Motor neuron (in vitro differentiated cells): ENCODE measurements at regions of chr9 and their contacts with region 1.

Region 1: DNA sequence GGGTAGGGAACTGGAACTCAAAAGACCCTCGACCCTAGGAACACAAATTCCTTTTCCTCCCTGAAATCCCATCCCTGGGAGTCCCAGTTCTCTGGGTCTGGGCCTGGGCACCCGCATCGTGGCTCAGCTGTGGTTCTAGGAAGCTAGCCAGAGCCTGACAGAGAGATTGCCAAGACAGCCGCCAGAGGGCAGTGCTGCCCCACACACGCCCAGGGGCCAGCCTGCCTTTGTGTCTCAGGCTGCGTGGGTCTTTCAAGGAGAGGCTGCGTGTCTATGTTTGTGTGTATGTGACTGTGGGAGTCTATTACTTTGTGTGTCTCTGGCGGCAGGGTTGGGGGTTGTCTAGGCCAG is 32.0 kb upstream of the TTLL11 start:
- ATAC-seq: peak; percentile 83 to 92 (median 88)
- H3K4me3 ChIP-seq: no peak overlapping the region
- H3K27ac ChIP-seq: no peak overlapping the region
- H3K4me1 ChIP-seq: peaks cover 0 to 2% of the 10 kb centered on the region in 2 donors

Region 2: GRCh38 chr9:121929893-121930875 is 194.9 kb before region 1 on chr9:
- in situ Hi-C with region 1: no loop called
- ATAC-seq: peak in 6 of 8 experiments; percentile 32 to 98 (median 62)
- H3K4me3 ChIP-seq: no peak overlapping the region
- H3K27ac ChIP-seq: no peak overlapping the region
- H3K4me1 ChIP-seq: peaks cover 6 to 16% of the 10 kb centered on the region in 2 donors

Region 3: GRCh38 chr9:122350638-122351355 is 225.7 kb after region 1 on chr9:
- in situ Hi-C with region 1: loop called (anchors 10 to 25 kb)
- ATAC-seq: peak; percentile 69 to 95 (median 91)
- H3K4me3 ChIP-seq: no peak overlapping the region
- H3K27ac ChIP-seq: no peak overlapping the region
- H3K4me1 ChIP-seq: no peaks in the 10 kb centered on the region

Region 4: DNA sequence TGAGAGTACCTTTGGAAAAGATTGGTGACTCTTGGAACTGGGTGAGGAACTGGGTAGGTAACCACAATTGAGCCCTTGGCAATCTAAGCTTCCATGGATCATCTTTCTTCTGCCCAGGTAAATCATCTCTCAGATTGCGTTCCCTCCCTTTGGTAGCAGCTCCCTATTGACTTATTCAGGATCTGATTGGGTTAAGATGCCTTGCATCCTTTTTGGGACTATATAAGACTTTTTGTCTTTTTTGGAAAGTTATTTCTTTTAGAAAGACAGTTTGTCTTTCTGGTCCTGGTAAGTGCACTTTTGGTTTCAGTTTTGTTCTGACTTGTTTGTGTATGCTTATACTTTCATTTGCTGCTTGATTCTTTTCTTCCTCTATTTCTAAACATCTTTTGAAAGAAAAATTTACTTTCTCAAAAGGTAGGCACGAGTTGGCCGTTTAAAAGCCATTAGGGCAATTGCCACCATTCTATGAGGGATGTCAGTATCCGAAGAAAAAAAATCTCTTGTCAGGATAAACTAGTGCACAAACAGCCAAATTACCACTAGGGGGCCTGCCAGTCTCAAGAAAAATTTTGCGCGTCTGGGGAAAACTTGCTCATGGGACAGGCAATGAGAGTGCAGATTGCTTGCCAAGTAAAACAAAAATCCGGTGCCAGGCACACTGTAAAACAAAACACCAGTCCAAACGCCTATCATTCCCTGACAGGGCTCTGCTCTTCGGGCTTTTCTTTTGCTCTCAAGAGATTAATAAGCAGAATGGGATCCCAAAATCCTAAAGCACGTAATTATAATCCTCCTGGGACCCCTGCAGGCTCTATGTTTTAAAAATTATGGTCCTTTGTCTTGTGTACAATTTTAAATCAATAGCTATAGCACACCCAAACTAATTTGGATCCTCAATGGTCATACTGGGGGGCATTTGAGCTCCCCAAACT is 339.8 kb after region 1 on chr9:
- in situ Hi-C with region 1: loop called in 2 of 9 experiments (anchors 25 kb)
- ATAC-seq: peak in 6 of 8 experiments; percentile 40 to 97 (median 71)
- H3K4me3 ChIP-seq: no peak overlapping the region
- H3K27ac ChIP-seq: no peak overlapping the region
- H3K4me1 ChIP-seq: no peaks in the 10 kb centered on the region

Region 5: GRCh38 chr9:122810306-122810946 is 685.3 kb after region 1 on chr9:
- in situ Hi-C with region 1: loop called in 5 of 9 experiments (anchors 25 kb)
- ATAC-seq: peak; percentile 85 to 98 (median 94)
- H3K4me3 ChIP-seq: no peak overlapping the region
- H3K27ac ChIP-seq: no peak overlapping the region
- H3K4me1 ChIP-seq: no peaks in the 10 kb centered on the region